OCI-LY7 (cell line): ENCODE measurements at regions of chr1 and their contacts with region 1.

Region 1: GRCh38 chr1:199113265-199113869 is 474.5 kb downstream of the PTPRC start:
- DNase-seq: peak; percentile 80
- H3K4me3 ChIP-seq: no peak overlapping the region
- H3K27ac ChIP-seq: no peak overlapping the region
- H3K4me1 ChIP-seq: no peaks in the 10 kb centered on the region
- CTCF ChIP-seq: peak; percentile 98

Region 2: DNA sequence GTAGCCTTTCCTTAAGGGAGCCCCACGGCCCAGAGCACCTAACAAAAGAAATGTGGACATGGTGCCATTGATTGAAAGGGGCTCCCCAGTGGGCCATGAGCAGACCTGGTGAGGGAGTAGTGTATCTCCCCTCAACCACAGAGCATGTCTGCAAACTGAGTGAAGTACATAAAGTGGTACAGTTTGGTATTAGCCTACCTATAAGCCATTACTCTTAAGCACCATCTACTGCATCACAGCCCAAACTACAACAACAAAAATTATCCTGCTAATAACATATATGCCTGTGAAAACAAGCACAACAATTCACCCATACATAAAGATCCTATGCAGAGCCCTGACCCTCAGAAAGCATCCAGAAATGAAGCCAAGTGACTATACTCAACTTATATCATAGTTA is 66.7 kb before region 1 on chr1:
- CTCF ChIA-PET with region 1: no interaction called
- POLR2A ChIA-PET with region 1: no interaction called
- intact Hi-C with region 1: loop called (anchors 5 kb)
- DNase-seq: peak; percentile 54
- H3K4me3 ChIP-seq: no peak overlapping the region
- H3K27ac ChIP-seq: no peak overlapping the region
- H3K4me1 ChIP-seq: peaks cover 21% of the 10 kb centered on the region
- CTCF ChIP-seq: peak; percentile 74